Sigmoid colon (tissue), 7 donors: ENCODE measurements at regions of chr6 and their contacts with region 1.

Region 1: DNA sequence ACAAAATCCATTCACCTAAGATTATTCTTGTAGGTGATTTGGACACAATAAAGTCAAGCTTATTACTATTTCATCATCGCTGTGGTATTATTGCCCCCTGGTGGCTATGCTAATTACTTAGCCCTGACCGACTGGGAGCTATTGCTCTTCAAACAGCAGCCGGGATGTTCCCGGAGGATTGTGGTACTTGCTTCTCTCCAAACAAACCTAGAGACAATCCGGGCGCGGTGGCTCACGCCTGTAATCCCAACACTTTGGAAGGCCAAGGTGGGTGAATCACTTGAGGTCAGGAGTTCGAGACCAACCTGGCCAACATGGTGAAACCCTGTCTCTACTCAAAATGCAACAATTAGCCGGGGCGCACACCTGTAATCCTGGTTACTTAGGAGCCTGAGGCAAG is 15.4 kb upstream of the STMND1 start:
- DNase-seq: peak; percentile 71
- H3K4me3 ChIP-seq: no peak overlapping the region
- H3K27ac ChIP-seq: peak overlapping the region in 1 of 4 donors; percentile 11
- H3K4me1 ChIP-seq: peaks cover 0 to 12% (median 8%) of the 10 kb centered on the region in 4 donors
- H3K27me3 ChIP-seq: no peaks in the 10 kb centered on the region
- CTCF ChIP-seq: peak; percentile 61 to 66 (median 62)
- EP300 ChIP-seq: no peak
- POLR2A ChIP-seq: no peak

Region 2: DNA sequence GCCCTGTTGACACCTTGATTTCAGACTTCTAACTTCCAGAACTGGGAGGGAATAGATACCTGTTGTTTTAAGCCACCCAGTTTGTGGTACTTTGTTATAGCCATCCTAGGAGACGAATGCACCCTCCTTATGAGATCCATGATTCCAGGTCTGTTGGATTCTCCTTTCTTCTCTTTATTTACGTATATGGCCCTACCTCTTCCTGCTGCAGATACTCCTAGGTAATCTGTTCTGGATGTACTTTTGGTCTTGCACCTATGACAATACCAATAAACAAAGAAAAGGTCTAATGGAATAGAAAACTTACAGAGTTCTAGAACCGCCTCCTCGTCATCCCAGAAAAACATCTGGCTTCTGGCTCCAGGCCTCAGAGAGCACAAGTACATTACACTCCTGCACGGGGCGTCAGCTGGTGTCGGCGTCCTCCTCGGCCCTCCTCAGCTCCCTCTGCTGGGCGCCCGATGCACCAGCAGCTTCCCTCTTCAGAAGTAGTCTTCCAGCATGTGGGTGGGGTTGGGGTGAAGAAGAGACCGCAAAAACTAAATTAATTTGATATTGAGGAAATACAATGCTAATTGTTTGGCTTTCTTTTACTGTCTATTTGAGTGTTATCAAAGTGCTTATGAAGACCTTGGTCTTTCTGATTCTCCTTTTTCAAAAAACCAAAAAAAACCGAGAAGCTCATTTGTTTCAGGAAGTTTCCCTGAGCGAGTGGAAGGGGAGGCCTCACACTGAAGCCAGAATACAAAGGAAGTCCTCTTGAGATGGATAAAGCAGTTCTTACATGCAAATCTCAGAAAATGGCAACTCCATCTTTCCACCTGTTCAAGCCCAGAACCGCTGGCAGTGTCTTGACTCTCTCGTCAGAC is 315.5 kb before region 1 on chr6:
- intact Hi-C with region 1: loop called (anchors 2 kb)
- DNase-seq: peak; percentile 92
- H3K4me3 ChIP-seq: no peak overlapping the region
- H3K27ac ChIP-seq: peak overlapping the region; percentile 64 to 99 (median 86)
- H3K4me1 ChIP-seq: peaks cover 0 to 53% (median 50%) of the 10 kb centered on the region in 4 donors
- H3K27me3 ChIP-seq: no peaks in the 10 kb centered on the region
- CTCF ChIP-seq: peak; percentile 73 to 87 (median 84)
- EP300 ChIP-seq: peak in 1 of 4 donors; percentile 88
- POLR2A ChIP-seq: no peak

Region 3: GRCh38 chr6:16803294-16804200 is 282.9 kb before region 1 on chr6:
- intact Hi-C with region 1: loop called (anchors 10 kb)
- DNase-seq: peak; percentile 82
- H3K4me3 ChIP-seq: peak overlapping the region; percentile 7 to 46 (median 36)
- H3K27ac ChIP-seq: peak overlapping the region; percentile 67 to 87 (median 74)
- H3K4me1 ChIP-seq: peaks cover 0 to 36% (median 26%) of the 10 kb centered on the region in 4 donors
- H3K27me3 ChIP-seq: no peaks in the 10 kb centered on the region
- CTCF ChIP-seq: no peak
- EP300 ChIP-seq: no peak
- POLR2A ChIP-seq: no peak

Region 4: GRCh38 chr6:16964553-16965501 is 121.6 kb before region 1 on chr6:
- intact Hi-C with region 1: loop called (anchors 10 kb)
- DNase-seq: peak; percentile 87
- H3K4me3 ChIP-seq: peak overlapping the region in 1 of 4 donors; percentile 14
- H3K27ac ChIP-seq: no peak overlapping the region
- H3K4me1 ChIP-seq: peaks cover 0 to 10% (median 4%) of the 10 kb centered on the region in 4 donors
- H3K27me3 ChIP-seq: no peaks in the 10 kb centered on the region
- CTCF ChIP-seq: peak; percentile 67 to 89 (median 82)
- EP300 ChIP-seq: no peak
- POLR2A ChIP-seq: peak in 1 of 2 donors; percentile 12

Region 5: DNA sequence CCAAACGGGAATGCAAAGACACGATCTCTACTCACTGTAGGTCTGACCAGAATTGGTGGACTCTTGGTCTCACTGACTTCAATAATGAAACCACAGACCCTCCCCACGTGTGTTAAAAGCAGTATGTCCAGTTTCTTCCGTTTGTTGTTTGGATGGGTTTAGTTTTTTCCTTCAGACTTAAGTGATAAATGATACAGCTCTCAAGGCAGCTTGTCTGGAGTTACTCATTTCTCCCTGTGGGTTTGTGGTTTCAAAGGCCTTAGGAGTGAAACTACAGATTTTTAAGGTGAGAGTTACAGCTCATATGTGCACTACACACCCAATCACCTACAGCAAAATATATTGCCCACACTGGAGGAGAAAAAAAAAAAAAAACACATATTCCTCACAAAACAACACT is 71.3 kb before region 1 on chr6:
- intact Hi-C with region 1: loop called (anchors 1 kb)
- DNase-seq: no peak
- H3K4me3 ChIP-seq: no peak overlapping the region
- H3K27ac ChIP-seq: peak overlapping the region in 2 of 4 donors; percentile 88 to 90
- H3K4me1 ChIP-seq: peaks cover 0 to 31% (median 16%) of the 10 kb centered on the region in 4 donors
- H3K27me3 ChIP-seq: no peaks in the 10 kb centered on the region
- CTCF ChIP-seq: no peak
- EP300 ChIP-seq: no peak
- POLR2A ChIP-seq: no peak

Region 6: GRCh38 chr6:17054663-17055062 is 31.8 kb before region 1 on chr6:
- intact Hi-C with region 1: loop called (anchors 5 kb)
- DNase-seq: no peak
- H3K4me3 ChIP-seq: no peak overlapping the region
- H3K27ac ChIP-seq: no peak overlapping the region
- H3K4me1 ChIP-seq: no peaks in the 10 kb centered on the region
- H3K27me3 ChIP-seq: no peaks in the 10 kb centered on the region
- CTCF ChIP-seq: no peak
- EP300 ChIP-seq: no peak
- POLR2A ChIP-seq: no peak